Activated naive CD4-positive, alpha-beta T cell treated with anti-CD3 and anti-CD28 coated beads, Interleukin-2, amount 10 ng/mL, durations not matched to agents 7 days and 5 days (primary cell): ENCODE measurements at regions of chr13 and their contacts with region 1.

Region 1: DNA sequence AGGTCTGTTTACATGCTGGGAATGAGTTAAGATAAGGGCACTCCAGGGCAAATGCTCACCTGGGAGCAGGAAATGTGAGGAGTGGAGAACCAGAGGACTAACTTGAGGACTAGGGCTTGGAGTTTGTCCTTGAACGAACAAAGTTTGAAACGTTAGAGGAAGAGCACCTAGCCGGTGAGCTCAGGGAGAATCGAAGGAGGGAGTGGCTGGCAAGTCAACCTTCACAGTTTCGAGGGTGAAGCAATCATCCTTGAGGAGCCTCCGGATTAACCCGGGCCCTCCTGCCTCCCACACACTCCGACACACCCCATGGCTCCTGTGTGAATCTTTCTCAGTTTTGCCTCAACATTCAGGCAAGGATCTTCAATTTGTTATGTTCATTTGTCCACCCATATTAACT is 58.6 kb downstream of the LMO7 start:
- DNase-seq: no peak
- H3K4me3 Mint-ChIP-seq: no peak overlapping the region
- H3K27ac Mint-ChIP-seq: no peak overlapping the region
- H3K4me1 Mint-ChIP-seq: no peaks in the 10 kb centered on the region
- H3K27me3 Mint-ChIP-seq: no peaks in the 10 kb centered on the region

Region 2: DNA sequence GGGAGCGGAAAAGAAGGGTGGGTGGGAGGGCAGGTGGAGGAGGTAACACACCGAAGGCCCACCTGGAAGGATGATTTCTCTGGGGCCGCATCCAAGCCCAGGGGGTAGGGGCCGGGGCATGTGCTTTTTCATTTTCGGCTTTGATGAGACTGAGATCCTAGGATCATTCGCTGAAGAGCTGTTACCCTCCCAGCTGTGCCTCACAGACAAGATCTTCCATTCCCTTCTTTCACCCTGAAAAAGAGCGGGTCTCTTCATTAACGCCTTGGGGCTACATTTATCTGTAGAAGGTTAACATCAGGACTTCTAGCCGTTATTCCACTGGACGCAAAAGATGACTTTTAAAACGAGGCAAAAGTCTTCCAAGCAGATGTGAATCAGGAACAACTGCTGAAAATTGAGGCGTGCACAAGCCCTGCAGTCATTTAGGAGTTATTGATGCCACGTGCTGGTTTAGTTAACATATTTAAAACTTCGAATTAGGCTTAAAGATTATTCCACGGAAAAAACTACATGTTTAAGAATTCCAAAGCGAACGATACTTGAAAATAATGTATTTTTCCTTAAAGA is 57.5 kb before region 1 on chr13:
- CTCF ChIA-PET with region 1: no interaction called
- DNase-seq: no peak
- H3K4me3 Mint-ChIP-seq: peak overlapping the region; percentile 75
- H3K27ac Mint-ChIP-seq: no peak overlapping the region
- H3K4me1 Mint-ChIP-seq: peaks cover 24% of the 10 kb centered on the region
- H3K27me3 Mint-ChIP-seq: peaks cover 33% of the 10 kb centered on the region

Region 3: GRCh38 chr13:75675421-75675820 is 19.3 kb before region 1 on chr13:
- CTCF ChIA-PET with region 1: interaction called, 23 read pairs
- DNase-seq: no peak
- H3K4me3 Mint-ChIP-seq: no peak overlapping the region
- H3K27ac Mint-ChIP-seq: no peak overlapping the region
- H3K4me1 Mint-ChIP-seq: no peaks in the 10 kb centered on the region
- H3K27me3 Mint-ChIP-seq: no peaks in the 10 kb centered on the region

Region 4: GRCh38 chr13:75705395-75705794 is 10.7 kb after region 1 on chr13:
- CTCF ChIA-PET with region 1: interaction called, 14 read pairs
- DNase-seq: no peak
- H3K4me3 Mint-ChIP-seq: no peak overlapping the region
- H3K27ac Mint-ChIP-seq: no peak overlapping the region
- H3K4me1 Mint-ChIP-seq: peaks cover 15% of the 10 kb centered on the region
- H3K27me3 Mint-ChIP-seq: no peaks in the 10 kb centered on the region

Region 5: DNA sequence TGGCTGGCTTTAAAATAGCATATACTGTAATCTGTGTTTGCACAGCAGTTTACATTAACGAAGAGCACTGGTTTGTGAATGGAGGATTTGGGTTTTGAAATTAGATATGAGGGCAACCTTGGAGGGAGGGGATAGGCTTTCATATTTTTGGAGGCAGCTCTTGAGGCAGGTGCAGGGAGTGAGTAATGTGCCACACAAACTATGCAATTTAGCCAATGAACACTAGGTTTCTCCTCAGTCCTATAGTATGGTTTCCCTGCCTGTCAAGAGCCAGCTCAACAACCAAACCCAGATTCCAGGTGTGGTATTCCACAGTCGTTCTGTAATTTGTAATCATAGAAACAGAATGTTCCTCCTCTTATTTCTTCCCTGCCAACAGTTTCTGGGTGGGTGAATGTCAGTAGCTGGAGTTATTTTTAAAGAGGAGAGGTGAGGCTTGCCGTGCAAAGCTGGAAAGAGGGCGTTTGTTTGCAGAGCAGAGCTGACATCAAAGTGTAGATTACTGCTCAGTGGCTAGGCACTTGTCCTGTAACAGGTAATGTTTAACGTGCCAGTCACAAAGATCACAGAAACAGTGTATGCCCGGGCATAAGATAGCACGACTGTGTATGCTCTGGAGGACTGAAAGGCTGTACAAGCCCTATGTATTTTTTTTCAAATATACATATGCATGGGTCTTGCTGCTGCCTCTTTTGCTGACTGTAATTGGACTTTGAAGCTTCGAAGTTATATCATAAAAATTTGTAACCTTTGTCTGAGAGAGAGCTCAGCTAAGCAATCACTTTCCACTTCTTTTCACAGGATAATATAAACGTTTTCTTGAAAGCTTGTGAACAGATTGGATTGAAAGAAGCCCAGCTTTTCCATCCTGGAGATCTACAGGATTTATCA is 65.7 kb after region 1 on chr13:
- CTCF ChIA-PET with region 1: interaction called, 31 read pairs
- DNase-seq: peak; percentile 47
- H3K4me3 Mint-ChIP-seq: peak overlapping the region; percentile 74
- H3K27ac Mint-ChIP-seq: peak overlapping the region; percentile 94
- H3K4me1 Mint-ChIP-seq: peaks cover 62% of the 10 kb centered on the region
- H3K27me3 Mint-ChIP-seq: no peaks in the 10 kb centered on the region

Region 6: DNA sequence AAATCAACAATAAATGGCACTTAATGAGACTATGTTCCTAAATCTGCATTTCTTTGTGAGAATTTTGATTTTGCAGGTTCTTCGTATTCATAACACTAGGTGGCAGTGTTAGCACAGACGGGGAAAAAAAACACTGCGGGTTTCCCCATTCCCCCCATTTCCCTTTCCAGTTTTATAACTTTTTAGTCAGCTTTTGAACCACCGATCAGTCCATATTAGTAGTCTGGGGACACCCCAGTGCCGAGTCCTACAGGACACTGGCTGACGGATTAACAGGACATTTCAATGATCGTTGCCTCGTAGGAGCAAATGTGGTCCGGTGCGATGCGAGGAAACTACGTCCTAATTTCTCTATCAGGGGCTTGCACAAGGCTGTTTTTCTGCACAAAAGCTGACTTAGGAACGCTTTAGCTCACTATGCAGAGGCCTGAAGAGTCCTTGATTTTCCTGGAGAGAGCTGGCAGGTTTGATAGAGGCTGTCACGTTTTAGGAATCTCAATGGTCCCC is 175.7 kb after region 1 on chr13:
- CTCF ChIA-PET with region 1: interaction called, 58 read pairs
- DNase-seq: peak; percentile 22
- H3K4me3 Mint-ChIP-seq: peak overlapping the region; percentile 61
- H3K27ac Mint-ChIP-seq: peak overlapping the region; percentile 93
- H3K4me1 Mint-ChIP-seq: peaks cover 36% of the 10 kb centered on the region
- H3K27me3 Mint-ChIP-seq: peaks cover 15% of the 10 kb centered on the region

Region 7: DNA sequence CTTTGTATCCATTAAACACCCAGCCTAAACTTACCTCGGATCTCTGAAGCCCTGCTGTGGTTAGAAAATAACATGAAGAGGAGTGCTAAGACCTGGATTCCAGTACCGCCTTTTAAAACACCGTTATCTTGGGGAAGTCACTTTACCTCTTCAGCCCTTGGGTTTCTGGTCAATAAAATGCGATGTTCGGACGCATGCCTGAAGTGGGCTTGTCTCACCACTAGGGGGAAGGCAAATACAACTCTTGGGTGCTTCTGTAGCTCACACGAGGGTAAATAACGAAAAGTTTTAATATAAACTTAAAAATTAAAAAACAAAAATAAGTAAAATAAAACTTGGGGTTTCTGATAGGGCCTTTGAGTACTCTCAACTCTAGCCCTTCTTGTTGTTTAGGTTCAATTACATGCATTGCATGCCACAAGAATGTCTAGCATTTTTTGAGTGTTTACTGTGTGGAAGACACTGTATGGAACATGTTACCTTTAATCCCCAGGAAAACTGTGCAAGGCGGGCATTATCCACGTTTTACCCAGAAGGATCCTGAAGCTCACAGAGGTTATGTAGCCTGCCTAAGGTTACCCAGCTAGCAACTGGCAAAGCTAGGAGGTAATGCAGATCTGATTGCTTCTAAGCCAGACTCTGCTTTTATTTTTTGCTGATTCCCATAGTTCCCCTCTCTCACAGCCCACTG is 181.8 kb after region 1 on chr13:
- CTCF ChIA-PET with region 1: interaction called, 58 read pairs
- DNase-seq: peak; percentile 68
- H3K4me3 Mint-ChIP-seq: peak overlapping the region; percentile 33
- H3K27ac Mint-ChIP-seq: peak overlapping the region; percentile 30
- H3K4me1 Mint-ChIP-seq: peaks cover 26% of the 10 kb centered on the region
- H3K27me3 Mint-ChIP-seq: no peaks in the 10 kb centered on the region

Region 8: DNA sequence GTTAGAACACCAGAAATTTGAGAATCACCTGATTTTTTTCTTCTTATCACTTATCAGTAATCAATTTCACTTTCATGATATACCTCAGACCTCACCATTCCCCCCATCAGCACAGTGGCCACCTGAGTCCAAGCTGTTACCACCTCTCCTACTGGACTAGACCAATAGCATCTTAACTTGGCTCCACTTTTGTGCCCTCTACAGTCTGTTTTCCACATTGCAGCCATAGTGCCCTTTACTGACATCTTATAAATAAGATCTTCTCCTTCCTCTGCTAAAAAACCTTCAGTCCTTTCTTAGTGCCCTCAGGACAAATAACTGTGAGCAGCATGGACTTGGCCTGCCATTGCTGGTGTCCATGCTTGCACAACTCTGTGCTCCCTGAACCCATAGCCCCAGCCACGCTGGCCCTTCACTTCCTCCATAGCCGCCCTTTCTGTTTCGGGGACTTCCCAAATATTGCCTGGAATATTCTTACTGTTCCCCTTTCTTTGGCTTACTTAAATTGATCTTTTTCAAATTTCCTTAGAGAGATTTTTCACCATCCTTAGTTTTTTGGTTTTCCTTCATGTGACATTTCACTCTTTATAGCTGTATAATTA is 322.2 kb after region 1 on chr13:
- CTCF ChIA-PET with region 1: interaction called, 18 read pairs
- DNase-seq: peak; percentile 46
- H3K4me3 Mint-ChIP-seq: no peak overlapping the region
- H3K27ac Mint-ChIP-seq: no peak overlapping the region
- H3K4me1 Mint-ChIP-seq: no peaks in the 10 kb centered on the region
- H3K27me3 Mint-ChIP-seq: no peaks in the 10 kb centered on the region